Heart right ventricle (tissue), 16 donors: ENCODE measurements at regions of chr2 and their contacts with region 1.

Region 1: DNA sequence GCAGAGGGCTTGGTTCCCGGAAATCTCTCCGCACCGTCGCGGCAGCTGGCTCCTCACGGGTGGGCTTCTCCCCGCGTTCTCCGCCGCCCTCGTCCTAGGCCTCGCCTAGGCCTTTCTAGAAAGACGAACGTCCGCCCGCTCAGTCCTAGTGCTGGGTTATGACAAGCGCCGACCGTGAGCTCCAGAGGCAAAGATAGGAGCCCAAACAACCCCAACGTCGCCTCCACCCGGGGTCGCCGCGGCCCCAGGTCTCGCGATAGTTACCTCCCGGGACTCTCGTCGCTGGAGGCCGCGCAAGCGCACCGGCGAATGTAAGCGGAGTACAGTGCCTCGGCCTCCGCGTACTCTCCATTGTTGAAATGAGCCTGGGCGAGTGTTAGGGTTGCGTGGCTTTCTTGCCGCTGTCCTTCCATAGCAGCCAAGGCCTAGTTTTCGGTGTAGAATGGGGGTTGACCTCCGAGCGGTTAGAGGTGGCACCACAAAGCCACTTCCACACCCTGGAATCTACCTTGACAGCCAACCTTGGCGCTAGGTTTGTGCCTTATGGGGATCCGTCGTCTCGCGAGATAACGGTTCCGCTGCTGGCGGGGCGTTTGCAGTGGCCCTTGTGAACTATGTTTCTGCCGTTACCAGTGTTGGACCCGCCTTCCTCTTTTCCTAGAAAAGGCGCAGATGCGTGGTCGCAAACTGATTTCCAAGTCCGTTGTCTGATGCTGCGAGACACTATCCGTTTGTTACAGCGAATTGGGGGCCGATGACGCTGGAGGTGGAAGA is at the start of gene TTC32:
- DNase-seq: peak; percentile 94 to 96
- ATAC-seq: peak; percentile 97 to 99 (median 98)
- H3K4me3 ChIP-seq: peak within 1 kb of the TSS; percentile 70 to 97 (median 80)
- H3K27ac ChIP-seq: peak within 1 kb of the TSS; percentile 87 to 99 (median 95)
- H3K4me1 ChIP-seq: peaks cover 3 to 51% (median 47%) of the 10 kb centered on the region in 9 donors
- H3K27me3 ChIP-seq: no peaks in the 10 kb centered on the region
- CTCF ChIP-seq: peak in 1 of 9 donors; percentile 9
- total RNA-seq, gene TTC32: 3.4 to 9.0 (median 6.0) TPM

Region 2: DNA sequence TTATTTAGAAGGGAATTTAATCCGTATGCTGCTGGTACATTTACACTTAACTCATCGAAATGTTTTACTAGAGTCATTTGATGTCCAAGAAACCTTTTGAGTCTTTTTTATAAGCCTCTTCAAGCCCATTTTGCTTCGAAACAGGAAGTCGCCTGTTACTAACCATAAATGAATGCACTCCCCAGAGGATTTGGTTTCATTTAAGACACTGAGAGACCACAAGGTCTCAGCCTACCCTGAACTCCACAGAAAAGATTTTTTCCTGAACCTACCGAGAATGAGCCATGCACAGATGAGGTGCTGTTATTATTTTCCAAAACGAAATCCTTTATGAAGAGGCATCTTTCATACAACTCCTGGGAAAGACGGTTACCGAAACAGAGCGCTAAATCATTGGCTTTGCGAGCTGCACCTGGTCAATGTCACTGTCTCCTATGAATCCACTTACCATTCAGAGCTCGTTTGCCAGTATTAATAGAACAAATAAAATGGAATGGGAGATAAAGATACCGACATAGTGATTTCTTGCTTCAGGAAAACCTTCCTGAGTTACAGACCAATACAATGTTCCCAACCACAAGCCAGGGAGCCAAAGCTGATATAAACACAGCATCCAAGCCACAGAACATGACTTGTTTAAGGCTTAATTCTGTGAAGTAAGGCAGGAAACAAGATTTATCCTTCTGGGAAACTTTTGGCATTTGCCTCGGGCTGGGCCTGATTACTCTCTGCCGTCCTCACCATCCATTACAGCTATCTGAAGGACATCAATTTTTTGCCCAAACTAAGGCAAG is 925.3 kb before region 1 on chr2:
- intact Hi-C with region 1: loop called in 1 of 10 experiments (anchors 5 kb)
- DNase-seq: no peak
- ATAC-seq: peak; percentile 44 to 78 (median 70)
- H3K4me3 ChIP-seq: peak overlapping the region in 6 of 10 donors; percentile 5 to 38 (median 32)
- H3K27ac ChIP-seq: peak overlapping the region; percentile 26 to 84 (median 64)
- H3K4me1 ChIP-seq: peaks cover 0 to 36% (median 18%) of the 10 kb centered on the region in 9 donors
- H3K27me3 ChIP-seq: no peaks in the 10 kb centered on the region
- CTCF ChIP-seq: no peak

Region 3: DNA sequence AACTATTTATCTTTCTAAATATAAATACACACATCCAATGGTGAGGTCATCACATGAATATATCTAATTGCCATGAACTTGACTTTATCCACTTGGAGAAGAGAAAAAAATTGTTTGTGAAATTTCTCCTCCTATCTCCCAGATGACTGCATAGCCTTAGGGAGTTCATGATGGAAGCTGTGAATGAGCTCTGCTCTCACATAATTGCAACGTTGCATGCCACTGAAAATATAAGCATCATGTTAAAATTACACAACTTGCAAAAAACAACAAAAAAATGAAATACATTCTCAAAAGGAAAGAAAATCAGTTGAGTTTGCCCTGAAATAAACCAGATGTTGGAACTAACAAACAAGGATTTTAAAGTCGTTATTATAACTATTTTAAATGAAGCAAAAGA is 492.6 kb before region 1 on chr2:
- intact Hi-C with region 1: no loop called
- DNase-seq: no peak
- ATAC-seq: no peak
- H3K4me3 ChIP-seq: no peak overlapping the region
- H3K27ac ChIP-seq: peak overlapping the region in 1 of 10 donors; percentile 3
- H3K4me1 ChIP-seq: peaks cover 0 to 9% (median 0%) of the 10 kb centered on the region in 9 donors
- H3K27me3 ChIP-seq: no peaks in the 10 kb centered on the region
- CTCF ChIP-seq: no peak

Region 4: DNA sequence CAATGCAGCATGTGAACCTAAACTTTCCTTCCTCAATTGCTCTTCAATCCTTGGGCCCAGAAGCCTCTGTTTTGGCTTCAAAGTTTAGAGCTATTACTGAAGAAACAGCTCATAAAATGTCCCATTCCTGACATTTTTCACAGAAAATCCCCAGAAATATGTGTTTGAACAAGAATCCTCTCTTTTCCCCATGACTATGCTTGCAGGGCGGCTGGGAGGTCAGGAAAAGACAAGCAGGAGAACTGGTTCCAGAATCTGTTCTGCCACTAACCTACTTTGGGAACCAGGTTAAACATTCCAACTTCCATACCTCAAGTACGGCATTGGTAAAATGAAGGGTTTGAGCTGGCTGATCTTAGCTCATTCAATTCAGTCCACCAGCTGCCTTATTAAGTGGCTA is 455.3 kb before region 1 on chr2:
- intact Hi-C with region 1: no loop called
- DNase-seq: no peak
- ATAC-seq: no peak
- H3K4me3 ChIP-seq: no peak overlapping the region
- H3K27ac ChIP-seq: no peak overlapping the region
- H3K4me1 ChIP-seq: no peaks in the 10 kb centered on the region
- H3K27me3 ChIP-seq: no peaks in the 10 kb centered on the region
- CTCF ChIP-seq: no peak

Region 5: DNA sequence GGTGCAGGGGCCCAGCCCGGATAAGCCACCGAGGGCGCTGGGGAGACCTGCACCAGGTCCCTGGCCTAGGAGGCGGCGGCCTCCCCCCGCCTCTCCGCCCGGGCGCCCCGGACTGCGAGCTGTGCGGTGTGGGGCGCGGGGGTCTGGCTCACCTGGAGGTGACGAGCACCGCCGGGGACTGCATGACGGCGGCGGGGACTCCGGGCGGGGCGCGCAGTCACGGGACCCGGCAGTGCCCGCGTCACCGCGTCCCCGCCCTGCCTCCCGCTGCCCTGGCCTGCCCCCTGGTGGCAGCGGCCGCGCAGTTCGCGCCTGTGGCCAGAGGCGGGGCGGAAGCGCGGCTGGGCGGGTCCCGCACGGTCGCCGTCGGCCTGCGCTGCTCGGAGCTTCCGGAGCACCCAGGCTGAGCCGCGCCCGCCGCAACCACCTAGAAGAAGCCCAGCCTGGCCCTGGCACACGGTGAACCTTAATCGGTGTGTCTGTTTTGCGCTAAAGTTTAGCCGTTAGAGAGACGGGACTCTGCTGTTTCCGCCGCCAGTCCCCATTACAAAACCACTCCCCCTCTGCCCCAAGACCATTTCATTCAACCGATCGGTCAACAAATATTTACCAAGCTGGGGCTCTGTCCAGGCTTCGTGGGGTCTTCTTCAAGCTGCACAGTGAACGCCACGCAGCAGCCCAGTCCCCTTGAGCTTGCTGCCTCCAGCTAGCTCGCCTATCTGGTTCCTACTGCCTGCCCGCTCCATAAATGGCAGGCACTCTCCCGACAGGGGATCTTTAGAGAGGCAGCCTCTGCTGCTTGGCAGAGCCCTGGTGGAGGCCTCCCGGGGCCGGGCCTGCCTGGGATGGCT is 749.5 kb after region 1 on chr2 and contains the start of gene HS1BP3:
- intact Hi-C with region 1: loop called in 1 of 10 experiments (anchors 5 kb)
- DNase-seq: peak; percentile 79 to 88
- ATAC-seq: peak; percentile 91 to 98 (median 96)
- H3K4me3 ChIP-seq: peak within 1 kb of the TSS; percentile 72 to 99 (median 94)
- H3K27ac ChIP-seq: peak within 1 kb of the TSS; percentile 22 to 97 (median 90)
- H3K4me1 ChIP-seq: peaks cover 3 to 39% (median 35%) of the 10 kb centered on the region in 9 donors
- H3K27me3 ChIP-seq: peaks cover 0 to 4% (median 0%) of the 10 kb centered on the region in 7 donors
- CTCF ChIP-seq: peak; percentile 74 to 99 (median 92)
- total RNA-seq, gene HS1BP3: 11.3 to 26.3 (median 16.1) TPM